T-cell (primary cell): ENCODE measurements at regions of chr5 and their contacts with region 1.

Region 1: DNA sequence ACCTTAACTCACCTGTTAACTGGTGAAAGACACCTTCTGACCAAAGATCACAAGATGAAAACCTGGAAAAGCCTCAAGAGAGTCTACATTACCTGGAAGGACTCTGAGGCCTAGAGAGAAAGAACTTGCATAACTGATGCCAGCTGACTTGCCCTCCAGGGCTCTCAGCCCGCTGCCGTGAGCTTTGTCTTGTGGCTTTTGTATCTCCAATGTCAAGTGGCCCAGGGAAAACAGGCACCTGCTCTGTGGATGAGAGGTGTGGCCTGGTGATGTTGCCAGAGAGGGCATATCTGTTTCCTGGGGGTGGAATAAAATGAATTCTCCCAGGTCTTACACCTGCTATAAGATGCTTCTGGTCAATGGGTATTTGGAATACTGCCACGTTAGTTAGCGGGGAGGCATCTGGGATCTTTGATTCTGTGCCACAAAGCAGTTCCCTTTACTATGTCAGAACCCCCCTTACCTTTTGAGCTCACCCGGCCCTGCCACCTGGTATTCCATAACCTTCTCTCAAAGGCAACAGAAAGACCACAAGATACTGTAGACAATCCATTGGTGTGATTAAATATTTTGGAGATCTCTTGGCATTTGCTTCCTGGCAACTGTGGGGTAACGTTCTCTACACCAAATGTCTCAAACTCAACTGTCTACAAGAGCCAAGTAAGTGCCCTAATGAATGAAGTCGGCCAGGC is 54.9 kb upstream of the N4BP3 start:
- DNase-seq: no peak
- ATAC-seq: no peak
- H3K4me3 ChIP-seq: no peak overlapping the region
- H3K4me3 Mint-ChIP-seq: no peak overlapping the region
- H3K27ac ChIP-seq: no peak overlapping the region
- H3K27ac Mint-ChIP-seq: no peak overlapping the region
- H3K4me1 ChIP-seq: peaks cover 0 to 7% of the 10 kb centered on the region in 2 experiments
- H3K4me1 Mint-ChIP-seq: peaks cover 2 to 9% (median 3%) of the 10 kb centered on the region in 3 donors
- H3K27me3 ChIP-seq: peaks cover 0 to 13% of the 10 kb centered on the region in 2 experiments
- H3K27me3 Mint-ChIP-seq: no peaks in the 10 kb centered on the region

Region 2: DNA sequence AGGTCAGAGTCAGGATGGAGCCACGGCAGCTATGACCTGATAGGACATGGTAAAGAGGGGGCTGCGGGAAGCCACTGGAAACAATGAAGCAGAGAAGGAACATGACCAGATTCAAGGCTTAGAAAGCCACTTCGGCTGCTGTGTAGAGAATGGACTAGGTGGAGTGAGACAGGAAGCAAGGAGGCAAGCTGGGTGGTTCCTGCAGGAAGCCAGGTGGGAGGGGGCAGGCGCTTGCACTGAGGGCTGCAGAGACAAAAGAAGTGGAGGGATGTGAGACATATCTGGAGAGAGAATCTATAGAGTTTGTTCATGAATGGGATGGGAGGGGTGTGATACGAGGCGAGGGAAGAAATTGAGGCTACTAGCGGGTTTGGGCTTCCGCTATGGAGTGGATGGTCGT is 35.9 kb after region 1 on chr5:
- CTCF ChIA-PET with region 1: no interaction called
- POLR2A ChIA-PET with region 1: no interaction called
- DNase-seq: peak in 4 of 35 experiments; percentile 11 to 28 (median 20)
- ATAC-seq: peak; percentile 50 to 76 (median 66)
- H3K4me3 ChIP-seq: no peak overlapping the region
- H3K4me3 Mint-ChIP-seq: peak overlapping the region in 1 of 3 donors; percentile 70
- H3K27ac ChIP-seq: no peak overlapping the region
- H3K27ac Mint-ChIP-seq: peak overlapping the region in 1 of 2 donors; percentile 71
- H3K4me1 ChIP-seq: peaks cover 15 to 18% of the 10 kb centered on the region in 2 experiments
- H3K4me1 Mint-ChIP-seq: peaks cover 16 to 30% (median 22%) of the 10 kb centered on the region in 3 donors
- H3K27me3 ChIP-seq: no peaks in the 10 kb centered on the region
- H3K27me3 Mint-ChIP-seq: peaks cover 0 to 4% of the 10 kb centered on the region in 2 donors

Region 3: GRCh38 chr5:178153573-178154343 is 95.3 kb after region 1 on chr5 and contains the start of gene NHP2:
- CTCF ChIA-PET with region 1: interaction called in 1 of 2 experiments, 10 read pairs
- POLR2A ChIA-PET with region 1: no interaction called
- DNase-seq: peak; percentile 89 to 99 (median 93)
- ATAC-seq: peak; percentile 97 to 99 (median 99)
- H3K4me3 ChIP-seq: peak within 1 kb of the TSS; percentile 74 to 78
- H3K4me3 Mint-ChIP-seq: peak within 1 kb of the TSS; percentile 94 to 99 (median 98)
- H3K27ac ChIP-seq: peak within 1 kb of the TSS; percentile 25
- H3K27ac Mint-ChIP-seq: peak within 1 kb of the TSS; percentile 88 to 90
- H3K4me1 ChIP-seq: peaks cover 10 to 40% of the 10 kb centered on the region in 2 experiments
- H3K4me1 Mint-ChIP-seq: peaks cover 37 to 42% (median 42%) of the 10 kb centered on the region in 3 donors
- H3K27me3 ChIP-seq: no peaks in the 10 kb centered on the region
- H3K27me3 Mint-ChIP-seq: no peaks in the 10 kb centered on the region
- total RNA-seq, gene NHP2: 61.2 to 95.6 (median 91.2) TPM

Region 4: GRCh38 chr5:178182158-178182876 is 123.8 kb after region 1 on chr5:
- CTCF ChIA-PET with region 1: interaction called in 1 of 2 experiments, 15 read pairs
- POLR2A ChIA-PET with region 1: no interaction called
- DNase-seq: no peak
- ATAC-seq: peak in 2 of 4 experiments; percentile 16 to 42
- H3K4me3 ChIP-seq: no peak overlapping the region
- H3K4me3 Mint-ChIP-seq: no peak overlapping the region
- H3K27ac ChIP-seq: no peak overlapping the region
- H3K27ac Mint-ChIP-seq: peak overlapping the region in 1 of 2 donors; percentile 25
- H3K4me1 ChIP-seq: peaks cover 0 to 2% of the 10 kb centered on the region in 2 experiments
- H3K4me1 Mint-ChIP-seq: peaks cover 7 to 8% (median 7%) of the 10 kb centered on the region in 3 donors
- H3K27me3 ChIP-seq: no peaks in the 10 kb centered on the region
- H3K27me3 Mint-ChIP-seq: peaks cover 9 to 12% of the 10 kb centered on the region in 2 donors

Region 5: DNA sequence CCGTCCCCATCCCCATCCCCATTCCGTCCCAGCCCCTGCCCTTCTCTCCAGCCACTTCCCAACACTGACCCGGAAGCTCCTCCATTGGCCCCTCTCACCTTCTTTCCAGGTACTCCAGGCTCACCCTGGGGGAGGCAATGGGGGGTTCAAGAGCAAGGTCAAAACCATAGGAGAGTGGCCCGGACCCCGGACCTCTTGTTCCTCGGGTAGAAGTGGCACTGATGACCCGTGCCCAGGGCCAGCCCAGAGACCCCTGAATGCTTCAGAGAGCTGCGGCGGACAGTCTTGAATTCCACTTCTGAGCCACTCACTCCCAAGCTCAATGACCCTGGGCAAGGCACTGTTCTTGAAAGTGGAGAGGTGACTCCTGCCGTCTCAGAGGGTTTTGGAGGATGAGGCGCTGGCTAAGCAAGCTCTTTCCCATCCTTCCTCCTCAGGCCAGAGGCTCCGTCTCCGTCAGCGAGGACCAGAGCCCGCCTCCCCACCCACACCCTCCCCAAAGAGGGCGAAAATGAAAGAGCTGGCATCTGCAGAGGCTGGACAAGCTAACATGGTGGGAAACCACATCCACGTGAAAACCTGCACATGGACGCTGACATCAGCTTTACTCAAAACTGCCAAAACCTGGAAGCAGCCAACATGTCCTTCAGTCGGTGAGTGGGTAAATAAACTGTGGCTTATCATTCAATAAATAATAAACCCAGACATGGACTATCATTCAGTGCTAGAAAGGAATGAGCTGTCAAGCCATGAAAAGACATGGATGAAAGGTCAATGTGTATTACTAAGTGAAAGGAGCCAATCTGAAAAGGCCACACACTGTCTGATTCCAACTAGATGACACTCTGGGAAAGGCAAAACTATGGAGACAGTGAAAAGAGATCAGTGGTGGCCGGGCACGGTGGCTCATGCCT is 201.4 kb after region 1 on chr5:
- CTCF ChIA-PET with region 1: no interaction called
- POLR2A ChIA-PET with region 1: interaction called in 1 of 2 experiments, 10 read pairs
- DNase-seq: no peak
- ATAC-seq: no peak
- H3K4me3 ChIP-seq: no peak overlapping the region
- H3K4me3 Mint-ChIP-seq: no peak overlapping the region
- H3K27ac ChIP-seq: no peak overlapping the region
- H3K27ac Mint-ChIP-seq: no peak overlapping the region
- H3K4me1 ChIP-seq: no peaks in the 10 kb centered on the region
- H3K4me1 Mint-ChIP-seq: no peaks in the 10 kb centered on the region
- H3K27me3 ChIP-seq: peaks cover 0 to 8% of the 10 kb centered on the region in 2 experiments
- H3K27me3 Mint-ChIP-seq: no peaks in the 10 kb centered on the region